ENCODE measurements at regions of chr5 and their contacts with region 1.

Region 1: GRCh38 chr5:171207256-171207847 is 101.7 kb upstream of the TLX3 start:
- DNase-seq: peak; percentile 72
- H3K4me3 ChIP-seq: no peak overlapping the region
- H3K27ac ChIP-seq: no peak overlapping the region
- H3K4me1 ChIP-seq: no peaks in the 10 kb centered on the region
- H3K27me3 ChIP-seq: no peaks in the 10 kb centered on the region
- CTCF ChIP-seq: peak; percentile 41 to 43
- POLR2A ChIP-seq: no peak

Region 2: DNA sequence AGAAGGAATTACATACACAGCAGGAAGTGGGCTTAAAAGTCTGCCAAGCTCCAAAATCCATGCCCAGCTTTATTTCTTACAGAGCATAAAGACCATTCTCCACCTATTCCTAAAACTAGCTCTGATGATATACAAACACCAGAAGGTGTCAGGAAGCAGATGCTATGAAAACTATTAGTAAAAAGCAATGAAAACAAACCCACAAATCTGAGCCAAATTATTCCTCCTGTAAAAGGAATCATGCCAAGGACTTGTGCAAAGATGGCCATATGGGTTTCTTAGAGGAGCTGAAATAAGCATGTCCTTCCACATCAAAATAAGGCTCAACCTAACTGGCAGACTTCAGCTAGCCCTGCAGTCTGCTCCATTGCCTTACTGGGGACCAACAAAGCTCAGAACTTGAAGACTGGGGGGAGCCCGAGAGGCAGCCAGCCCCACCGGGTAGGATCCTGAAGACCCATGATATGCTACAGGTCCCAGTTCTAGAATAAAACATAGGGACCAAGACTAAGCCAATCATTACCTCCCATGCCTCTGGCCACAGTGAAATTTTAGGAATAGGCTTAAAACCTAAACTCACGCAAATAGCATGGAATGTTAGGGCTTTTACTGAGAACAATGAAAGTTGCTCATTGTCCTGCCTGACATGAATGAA is 466.7 kb before region 1 on chr5:
- CTCF ChIA-PET with region 1: interaction called, 12 read pairs
- POLR2A ChIA-PET with region 1: no interaction called
- dilution Hi-C with region 1: no loop called
- intact Hi-C with region 1: loop called (anchors 1 kb)
- DNase-seq: no peak
- H3K4me3 ChIP-seq: no peak overlapping the region
- H3K27ac ChIP-seq: no peak overlapping the region
- H3K4me1 ChIP-seq: peaks cover 6% of the 10 kb centered on the region
- H3K27me3 ChIP-seq: no peaks in the 10 kb centered on the region
- CTCF ChIP-seq: no peak
- POLR2A ChIP-seq: no peak

Region 3: DNA sequence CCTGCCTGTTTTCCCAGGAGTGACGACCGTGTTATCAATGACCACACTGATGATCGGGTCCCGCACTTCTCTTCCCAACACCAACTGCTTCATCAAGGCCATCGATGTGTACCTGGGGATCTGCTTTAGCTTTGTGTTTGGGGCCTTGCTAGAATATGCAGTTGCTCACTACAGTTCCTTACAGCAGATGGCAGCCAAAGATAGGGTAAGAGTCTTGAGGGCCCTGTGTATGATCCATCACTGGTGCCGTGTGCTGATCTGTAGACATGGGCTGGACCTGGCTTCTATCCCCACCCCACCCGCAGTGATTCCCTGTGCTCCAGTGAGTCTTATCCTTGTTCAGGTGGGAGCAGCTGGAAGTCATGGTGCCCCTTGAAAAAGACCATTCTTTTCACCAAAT is 397.8 kb before region 1 on chr5:
- CTCF ChIA-PET with region 1: interaction called, 11 read pairs
- POLR2A ChIA-PET with region 1: no interaction called
- dilution Hi-C with region 1: no loop called
- intact Hi-C with region 1: loop called (anchors 10 kb)
- DNase-seq: peak; percentile 48
- H3K4me3 ChIP-seq: no peak overlapping the region
- H3K27ac ChIP-seq: no peak overlapping the region
- H3K4me1 ChIP-seq: no peaks in the 10 kb centered on the region
- H3K27me3 ChIP-seq: no peaks in the 10 kb centered on the region
- CTCF ChIP-seq: peak; percentile 14 to 37
- POLR2A ChIP-seq: no peak

Region 4: GRCh38 chr5:171175746-171176145 is 31.6 kb before region 1 on chr5:
- CTCF ChIA-PET with region 1: interaction called, 10 read pairs
- POLR2A ChIA-PET with region 1: no interaction called
- dilution Hi-C with region 1: no loop called
- intact Hi-C with region 1: no loop called
- DNase-seq: no peak
- H3K4me3 ChIP-seq: no peak overlapping the region
- H3K27ac ChIP-seq: no peak overlapping the region
- H3K4me1 ChIP-seq: no peaks in the 10 kb centered on the region
- H3K27me3 ChIP-seq: no peaks in the 10 kb centered on the region
- CTCF ChIP-seq: no peak
- POLR2A ChIP-seq: no peak

Region 5: DNA sequence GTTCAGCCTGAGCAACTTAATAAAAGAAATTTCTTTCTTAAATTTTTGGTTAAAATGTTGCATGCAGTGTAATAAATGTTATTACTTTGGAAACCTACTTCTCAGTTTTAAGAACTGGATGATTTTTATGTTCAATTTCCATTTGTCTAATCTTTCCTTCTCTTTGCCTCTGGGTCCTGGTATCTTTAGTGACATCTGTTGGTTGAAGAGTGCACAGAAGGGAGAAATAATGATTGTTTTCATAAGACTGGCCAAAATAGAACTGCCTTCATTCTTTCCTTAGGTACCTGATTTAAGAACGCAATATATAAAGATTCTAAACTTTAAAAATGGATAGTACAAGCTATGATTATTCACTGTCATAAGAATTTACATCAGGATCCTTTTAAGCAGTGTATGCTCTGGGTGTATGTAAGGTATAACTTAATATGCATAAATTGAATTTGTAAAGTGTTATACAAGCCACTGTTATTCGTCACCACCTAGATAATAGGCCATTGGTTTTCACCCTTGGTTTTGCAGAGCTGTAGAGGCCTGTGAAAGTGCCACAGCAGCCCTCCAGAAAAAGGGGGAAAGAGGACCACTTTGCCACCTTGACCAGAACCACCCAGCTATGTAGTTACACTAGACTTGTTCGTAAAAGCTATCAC is 18.9 kb after region 1 on chr5:
- CTCF ChIA-PET with region 1: interaction called, 23 read pairs
- POLR2A ChIA-PET with region 1: no interaction called
- dilution Hi-C with region 1: no loop called
- intact Hi-C with region 1: no loop called
- DNase-seq: peak; percentile 42
- H3K4me3 ChIP-seq: no peak overlapping the region
- H3K27ac ChIP-seq: no peak overlapping the region
- H3K4me1 ChIP-seq: peaks cover 10% of the 10 kb centered on the region
- H3K27me3 ChIP-seq: no peaks in the 10 kb centered on the region
- CTCF ChIP-seq: no peak
- POLR2A ChIP-seq: no peak

Region 6: GRCh38 chr5:171251519-171251918 is 44.2 kb after region 1 on chr5:
- CTCF ChIA-PET with region 1: no interaction called
- POLR2A ChIA-PET with region 1: no interaction called
- dilution Hi-C with region 1: no loop called
- intact Hi-C with region 1: no loop called
- DNase-seq: no peak
- H3K4me3 ChIP-seq: no peak overlapping the region
- H3K27ac ChIP-seq: no peak overlapping the region
- H3K4me1 ChIP-seq: no peaks in the 10 kb centered on the region
- H3K27me3 ChIP-seq: no peaks in the 10 kb centered on the region
- CTCF ChIP-seq: no peak
- POLR2A ChIP-seq: no peak

Region 7: GRCh38 chr5:171336521-171337209 is 129.3 kb after region 1 on chr5:
- CTCF ChIA-PET with region 1: interaction called, 301 read pairs
- POLR2A ChIA-PET with region 1: no interaction called
- dilution Hi-C with region 1: no loop called
- intact Hi-C with region 1: loop called (anchors 1 kb)
- DNase-seq: peak; percentile 73
- H3K4me3 ChIP-seq: peak overlapping the region; percentile 35 to 66 (median 60)
- H3K27ac ChIP-seq: no peak overlapping the region
- H3K4me1 ChIP-seq: peaks cover 7% of the 10 kb centered on the region
- H3K27me3 ChIP-seq: peaks cover 8 to 11% of the 10 kb centered on the region in 2 experiments
- CTCF ChIP-seq: peak; percentile 58 to 83
- POLR2A ChIP-seq: no peak

Region 8: GRCh38 chr5:171351536-171352073 is 144.3 kb after region 1 on chr5:
- CTCF ChIA-PET with region 1: interaction called, 12 read pairs
- POLR2A ChIA-PET with region 1: no interaction called
- dilution Hi-C with region 1: no loop called
- intact Hi-C with region 1: no loop called
- DNase-seq: no peak
- H3K4me3 ChIP-seq: no peak overlapping the region
- H3K27ac ChIP-seq: no peak overlapping the region
- H3K4me1 ChIP-seq: no peaks in the 10 kb centered on the region
- H3K27me3 ChIP-seq: no peaks in the 10 kb centered on the region
- CTCF ChIP-seq: no peak
- POLR2A ChIP-seq: no peak

Measured in endothelial cell of umbilical vein (primary cell).